Breast epithelium (tissue), 4 donors: ENCODE measurements at regions of chr3 and their contacts with region 1.

Region 1: GRCh38 chr3:63937661-63938651 is 25.8 kb upstream of the SCAANT1 start:
- DNase-seq: no peak
- H3K4me3 ChIP-seq: no peak overlapping the region
- H3K27ac ChIP-seq: no peak overlapping the region
- H3K4me1 ChIP-seq: peaks cover 0 to 5% of the 10 kb centered on the region in 2 donors
- H3K27me3 ChIP-seq: no peaks in the 10 kb centered on the region
- CTCF ChIP-seq: no peak
- POLR2A ChIP-seq: no peak

Region 2: GRCh38 chr3:63990204-63990603 is 52.2 kb after region 1 on chr3:
- intact Hi-C with region 1: loop called (anchors 2 kb)
- DNase-seq: no peak
- H3K4me3 ChIP-seq: no peak overlapping the region
- H3K27ac ChIP-seq: no peak overlapping the region
- H3K4me1 ChIP-seq: no peaks in the 10 kb centered on the region
- H3K27me3 ChIP-seq: no peaks in the 10 kb centered on the region
- CTCF ChIP-seq: no peak
- POLR2A ChIP-seq: no peak